Activated CD8-positive, alpha-beta T cell treated with anti-CD3 and anti-CD28 coated beads for 36 hours (primary cell): ENCODE measurements at regions of chr15 and their contacts with region 1.

Region 1: DNA sequence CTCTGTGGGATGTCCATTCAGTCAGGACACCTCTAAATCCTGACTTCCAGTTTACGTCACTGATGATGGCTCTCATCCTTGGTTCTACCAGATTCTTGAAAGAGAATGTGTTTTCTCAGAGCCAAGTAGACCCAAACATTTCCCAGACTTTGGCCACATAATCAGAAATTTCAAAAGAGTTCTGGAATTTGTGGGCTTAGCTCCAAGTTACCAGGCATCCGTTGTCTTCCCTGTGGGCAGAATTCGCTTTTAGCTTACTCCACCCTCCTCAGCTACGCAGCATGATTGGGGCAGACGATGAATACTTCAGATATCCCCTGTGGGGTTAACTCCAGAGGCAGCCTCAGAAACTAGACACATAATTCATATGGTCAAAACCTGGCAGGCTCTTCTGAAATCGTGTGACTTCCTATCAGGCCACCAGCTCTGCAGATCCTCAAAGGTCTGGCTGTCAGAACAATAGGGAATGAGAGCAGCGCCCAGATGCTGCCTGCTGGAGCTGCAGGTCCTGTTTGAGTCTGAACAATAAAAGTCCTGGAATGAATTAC is 30.6 kb downstream of the CRTC3 start:
- DNase-seq: no peak
- ATAC-seq: no peak
- H3K4me3 Mint-ChIP-seq: no peak overlapping the region
- H3K27ac Mint-ChIP-seq: peak overlapping the region; percentile 10
- H3K4me1 Mint-ChIP-seq: peaks cover 81% of the 10 kb centered on the region
- H3K27me3 Mint-ChIP-seq: no peaks in the 10 kb centered on the region
- CTCF ChIP-seq: no peak

Region 2: GRCh38 chr15:90362936-90363212 is 197.4 kb before region 1 on chr15:
- CTCF ChIA-PET with region 1: no interaction called
- POLR2A ChIA-PET with region 1: no interaction called
- intact Hi-C with region 1: no loop called
- DNase-seq: no peak
- ATAC-seq: no peak
- H3K4me3 Mint-ChIP-seq: no peak overlapping the region
- H3K27ac Mint-ChIP-seq: no peak overlapping the region
- H3K4me1 Mint-ChIP-seq: peaks cover 25% of the 10 kb centered on the region
- H3K27me3 Mint-ChIP-seq: no peaks in the 10 kb centered on the region
- CTCF ChIP-seq: no peak

Region 3: DNA sequence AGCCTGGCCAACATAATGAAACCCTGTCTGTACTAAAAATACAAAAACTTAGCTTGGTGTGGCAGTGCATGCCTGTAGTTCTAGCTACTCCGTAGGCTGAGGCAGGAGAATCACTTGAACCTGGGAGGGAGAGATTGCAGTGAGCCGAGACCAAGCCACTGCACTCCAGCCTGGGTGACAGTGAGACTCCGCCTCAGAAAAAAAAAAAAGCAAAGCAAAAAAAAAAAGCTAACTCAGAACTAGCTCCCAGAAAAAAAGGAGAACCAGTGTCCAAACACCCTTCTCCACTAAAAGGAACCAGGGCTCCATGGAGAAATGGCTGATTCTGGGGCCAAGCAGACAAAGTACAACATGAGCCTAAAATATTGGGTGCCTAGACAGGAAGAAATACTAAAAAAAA is 47.3 kb before region 1 on chr15:
- CTCF ChIA-PET with region 1: no interaction called
- POLR2A ChIA-PET with region 1: no interaction called
- intact Hi-C with region 1: loop called (anchors 5 kb)
- DNase-seq: no peak
- ATAC-seq: no peak
- H3K4me3 Mint-ChIP-seq: no peak overlapping the region
- H3K27ac Mint-ChIP-seq: no peak overlapping the region
- H3K4me1 Mint-ChIP-seq: peaks cover 11% of the 10 kb centered on the region
- H3K27me3 Mint-ChIP-seq: no peaks in the 10 kb centered on the region
- CTCF ChIP-seq: no peak

Region 4: DNA sequence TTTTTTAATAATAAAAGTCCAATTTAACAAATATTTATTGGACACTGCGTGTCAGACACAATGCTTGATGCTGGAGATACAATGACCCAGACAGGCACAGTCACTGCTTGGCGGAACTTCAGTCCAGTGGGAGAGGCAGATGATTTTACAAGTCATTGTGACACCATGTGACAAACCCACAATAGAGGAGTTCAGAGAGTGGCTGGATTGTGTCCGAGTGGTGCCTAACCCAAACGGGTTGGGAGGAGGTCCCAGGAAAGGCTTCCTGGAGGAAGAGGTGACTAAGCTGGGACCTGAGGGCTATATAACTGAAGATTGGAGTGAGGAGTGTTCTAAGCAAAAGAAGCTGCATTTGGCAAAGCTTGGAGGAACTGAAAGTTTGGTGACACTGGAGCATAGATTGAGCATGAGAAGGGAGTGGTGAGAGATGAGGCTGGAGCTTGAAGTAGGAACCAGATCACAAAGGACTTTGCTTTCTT is 10.8 kb after region 1 on chr15:
- CTCF ChIA-PET with region 1: interaction called, 5 read pairs
- POLR2A ChIA-PET with region 1: interaction called, 10 read pairs
- intact Hi-C with region 1: no loop called
- DNase-seq: no peak
- ATAC-seq: no peak
- H3K4me3 Mint-ChIP-seq: peak overlapping the region; percentile 51
- H3K27ac Mint-ChIP-seq: peak overlapping the region; percentile 81
- H3K4me1 Mint-ChIP-seq: peaks cover 77% of the 10 kb centered on the region
- H3K27me3 Mint-ChIP-seq: no peaks in the 10 kb centered on the region
- CTCF ChIP-seq: no peak

Region 5: GRCh38 chr15:90598031-90598577 is 37.8 kb after region 1 on chr15:
- CTCF ChIA-PET with region 1: interaction called, 4 read pairs
- POLR2A ChIA-PET with region 1: interaction called, 3 read pairs
- intact Hi-C with region 1: loop called (anchors 5 kb)
- DNase-seq: peak; percentile 38
- ATAC-seq: peak; percentile 5
- H3K4me3 Mint-ChIP-seq: no peak overlapping the region
- H3K27ac Mint-ChIP-seq: peak overlapping the region; percentile 84
- H3K4me1 Mint-ChIP-seq: peaks cover 70% of the 10 kb centered on the region
- H3K27me3 Mint-ChIP-seq: no peaks in the 10 kb centered on the region
- CTCF ChIP-seq: no peak

Region 6: GRCh38 chr15:90671216-90671615 is 110.9 kb after region 1 on chr15:
- CTCF ChIA-PET with region 1: no interaction called
- POLR2A ChIA-PET with region 1: no interaction called
- intact Hi-C with region 1: no loop called
- DNase-seq: no peak
- ATAC-seq: no peak
- H3K4me3 Mint-ChIP-seq: no peak overlapping the region
- H3K27ac Mint-ChIP-seq: no peak overlapping the region
- H3K4me1 Mint-ChIP-seq: peaks cover 10% of the 10 kb centered on the region
- H3K27me3 Mint-ChIP-seq: peaks cover 8% of the 10 kb centered on the region
- CTCF ChIP-seq: no peak